ENCODE measurements at regions of chr19 and their contacts with region 1.

Region 1: GRCh38 chr19:18601875-18602274 is 4.7 kb downstream of the CRLF1 start:
- DNase-seq: no peak
- ATAC-seq: no peak

Region 2: GRCh38 chr19:18388100-18388959 is 213.5 kb before region 1 on chr19:
- intact Hi-C with region 1: no loop called
- DNase-seq: peak; percentile 95
- ATAC-seq: peak; percentile 86

Region 3: GRCh38 chr19:18612772-18613588 is 11.1 kb after region 1 on chr19 and contains the start of gene TMEM59L:
- intact Hi-C with region 1: no loop called
- DNase-seq: no peak
- ATAC-seq: no peak
- total RNA-seq, gene TMEM59L: 2.8 TPM

Region 4: DNA sequence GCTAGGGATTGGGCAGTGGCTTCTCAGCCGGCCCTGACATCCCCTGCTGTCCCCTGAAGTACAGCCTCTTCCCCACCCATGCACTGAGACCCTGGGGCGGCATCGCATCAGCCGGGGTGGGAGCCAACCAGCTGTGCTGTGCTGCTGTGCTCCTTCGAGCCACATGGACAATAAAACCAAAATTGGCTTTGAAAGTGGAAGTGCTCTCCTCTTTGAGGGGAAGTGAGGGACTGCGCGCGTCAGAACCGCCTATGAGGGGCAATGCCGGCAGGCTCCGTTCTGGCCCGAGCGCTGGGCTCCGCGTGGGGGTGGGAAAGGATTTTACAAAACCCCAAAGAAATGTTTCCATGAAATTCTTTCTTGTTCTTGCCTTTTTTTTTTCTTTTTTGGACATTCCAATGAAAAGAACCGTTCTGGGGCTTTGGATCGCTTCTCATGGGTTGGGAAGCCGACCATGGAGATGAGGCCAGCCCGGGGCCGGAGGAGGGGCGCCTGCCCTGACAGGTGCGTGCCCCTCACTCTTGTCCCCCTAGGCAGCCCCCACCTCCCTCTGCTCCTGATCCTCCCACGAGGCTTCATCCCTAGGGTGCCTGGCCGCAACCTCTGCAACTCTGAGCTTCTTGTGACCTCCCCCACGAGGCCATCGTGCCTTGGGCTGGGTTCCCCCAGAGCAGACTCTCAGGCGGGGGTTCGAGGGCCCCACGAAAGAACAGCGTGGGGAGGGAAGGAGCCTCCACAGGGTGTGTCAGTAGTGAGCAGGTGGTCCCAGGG is 57.6 kb after region 1 on chr19:
- intact Hi-C with region 1: loop called (anchors 2 kb)
- DNase-seq: peak; percentile 82
- ATAC-seq: peak; percentile 57

Region 5: GRCh38 chr19:18723871-18724377 is 122.0 kb after region 1 on chr19:
- intact Hi-C with region 1: no loop called
- DNase-seq: no peak
- ATAC-seq: no peak